ENCODE measurements at regions of chr2 and their contacts with region 1.

Region 1: GRCh38 chr2:64914735-64915509 is 74.3 kb upstream of the SLC1A4 start:
- DNase-seq: no peak
- ATAC-seq: no peak
- H3K4me3 ChIP-seq: no peak overlapping the region
- H3K27ac ChIP-seq: no peak overlapping the region
- H3K4me1 ChIP-seq: no peaks in the 10 kb centered on the region
- H3K27me3 ChIP-seq: no peaks in the 10 kb centered on the region

Region 2: GRCh38 chr2:65035346-65035943 is 120.5 kb after region 1 on chr2:
- intact Hi-C with region 1: loop called (anchors 2 to 5 kb)
- DNase-seq: no peak
- ATAC-seq: no peak
- H3K4me3 ChIP-seq: no peak overlapping the region
- H3K27ac ChIP-seq: no peak overlapping the region
- H3K4me1 ChIP-seq: peaks cover 6% of the 10 kb centered on the region
- H3K27me3 ChIP-seq: no peaks in the 10 kb centered on the region

Region 3: GRCh38 chr2:65040400-65041261 is 125.7 kb after region 1 on chr2:
- intact Hi-C with region 1: loop called (anchors 2 to 5 kb)
- DNase-seq: peak; percentile 86 to 92 (median 90)
- ATAC-seq: peak; percentile 94 to 95
- H3K4me3 ChIP-seq: no peak overlapping the region
- H3K27ac ChIP-seq: no peak overlapping the region
- H3K4me1 ChIP-seq: no peaks in the 10 kb centered on the region
- H3K27me3 ChIP-seq: no peaks in the 10 kb centered on the region

Region 4: DNA sequence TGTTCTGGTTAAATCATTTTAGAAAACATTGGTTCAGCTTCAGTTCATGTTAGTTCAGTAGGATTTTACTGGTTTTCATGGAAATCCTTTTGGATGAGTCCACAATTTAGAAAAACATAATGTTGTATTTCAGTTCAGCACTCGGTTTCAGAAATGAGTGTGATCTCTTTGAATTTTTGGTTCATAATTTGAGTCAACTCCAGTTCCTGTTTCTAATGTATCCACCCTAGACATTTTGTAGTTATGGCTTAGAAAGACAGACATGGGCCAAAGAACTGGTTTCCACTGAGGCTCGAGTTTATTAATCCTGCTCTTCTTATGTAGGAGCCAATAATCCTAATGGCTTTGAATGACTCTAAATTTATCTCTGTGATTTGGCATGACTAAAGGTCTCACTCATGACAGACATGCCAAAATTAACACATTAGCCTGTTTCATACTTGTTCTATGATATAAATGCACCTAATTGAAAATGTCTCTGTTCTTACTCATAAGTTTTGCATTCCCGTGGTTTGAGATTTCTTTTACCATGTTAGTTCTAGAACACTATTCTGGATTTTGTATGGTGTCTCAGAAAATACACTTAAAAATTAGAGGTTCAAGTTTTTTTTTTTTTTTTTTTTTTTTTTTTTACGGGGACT is 599.8 kb after region 1 on chr2:
- intact Hi-C with region 1: no loop called
- DNase-seq: no peak
- ATAC-seq: no peak
- H3K4me3 ChIP-seq: no peak overlapping the region
- H3K27ac ChIP-seq: no peak overlapping the region
- H3K4me1 ChIP-seq: no peaks in the 10 kb centered on the region
- H3K27me3 ChIP-seq: no peaks in the 10 kb centered on the region

Region 5: GRCh38 chr2:65566620-65567019 is 651.7 kb after region 1 on chr2:
- intact Hi-C with region 1: loop called in 1 of 4 experiments (anchors 10 kb)
- DNase-seq: no peak
- ATAC-seq: peak; percentile 37 to 42
- H3K4me3 ChIP-seq: peak overlapping the region; percentile 22
- H3K27ac ChIP-seq: no peak overlapping the region
- H3K4me1 ChIP-seq: no peaks in the 10 kb centered on the region
- H3K27me3 ChIP-seq: no peaks in the 10 kb centered on the region

Region 6: DNA sequence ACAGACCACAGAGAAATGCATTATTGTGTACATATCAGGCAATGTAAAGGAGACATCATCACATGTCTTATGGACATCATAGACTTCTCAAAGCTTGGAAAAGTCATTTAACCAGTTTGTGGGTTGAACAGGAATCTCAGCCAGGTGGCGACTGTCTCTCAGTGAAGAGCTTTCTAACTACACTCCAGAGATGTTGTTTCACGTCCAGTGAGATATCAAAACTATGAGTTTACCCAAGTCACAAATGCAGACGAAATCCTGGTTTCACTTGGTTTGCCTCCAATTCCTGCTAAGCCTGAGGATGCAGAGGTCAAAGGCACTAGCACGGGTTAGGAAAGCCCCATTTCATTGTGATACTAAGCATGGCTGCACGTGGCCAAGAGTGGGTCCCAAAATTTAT is 1135.5 kb after region 1 on chr2:
- intact Hi-C with region 1: no loop called
- DNase-seq: no peak
- ATAC-seq: no peak
- H3K4me3 ChIP-seq: no peak overlapping the region
- H3K27ac ChIP-seq: no peak overlapping the region
- H3K4me1 ChIP-seq: no peaks in the 10 kb centered on the region
- H3K27me3 ChIP-seq: no peaks in the 10 kb centered on the region